ENCODE measurements at regions of chr9 and their contacts with region 1.

Region 1: DNA sequence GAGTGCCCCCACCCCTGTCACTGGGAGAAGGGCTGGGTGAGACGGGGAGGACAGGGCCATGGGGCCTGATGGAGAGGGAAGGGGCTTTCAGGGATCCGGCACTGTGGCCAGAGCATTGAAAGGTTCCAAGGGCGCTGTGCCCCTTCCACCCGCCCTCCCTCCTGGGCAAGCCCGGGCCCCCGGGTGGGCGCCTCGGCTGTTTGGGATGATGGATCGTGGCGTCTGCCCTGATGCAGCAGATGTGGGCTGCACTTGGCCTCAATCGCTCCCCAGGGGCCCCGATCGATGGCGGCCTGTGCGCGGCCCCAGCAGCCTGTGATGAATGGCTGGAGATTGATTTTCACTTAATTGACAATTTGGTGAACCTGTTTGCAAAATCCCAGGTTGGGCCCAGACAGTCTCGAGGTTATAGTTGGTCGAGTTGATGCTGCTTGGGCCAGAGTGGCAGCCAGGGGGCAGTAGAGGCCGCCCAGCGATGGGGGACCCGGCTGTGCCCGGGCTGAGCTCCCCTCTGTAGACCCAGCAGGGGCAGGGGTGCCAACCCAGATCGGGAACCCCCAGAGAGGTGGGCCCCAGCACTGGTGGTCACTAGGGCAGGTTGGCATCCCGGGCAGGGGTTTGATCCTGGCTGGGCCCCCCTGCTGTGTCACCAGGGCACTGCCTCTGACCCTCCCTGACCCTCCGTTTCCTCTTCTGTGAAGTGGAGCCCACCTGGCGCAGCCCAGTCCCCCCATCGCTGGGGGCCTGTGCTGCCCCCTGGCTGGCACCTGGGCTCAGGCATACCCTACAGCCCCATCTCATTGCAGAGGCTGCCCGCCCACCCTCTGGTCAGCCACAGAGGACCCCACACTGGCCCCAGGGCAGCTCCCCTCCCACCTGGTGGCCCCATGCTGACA is 34.7 kb downstream of the LHX3 start:
- DNase-seq: peak; percentile 33 to 62
- ATAC-seq: peak; percentile 60 to 70 (median 68)
- H3K4me3 ChIP-seq: no peak overlapping the region
- H3K4me3 Mint-ChIP-seq: no peak overlapping the region
- H3K27ac ChIP-seq: no peak overlapping the region
- H3K27ac Mint-ChIP-seq: no peak overlapping the region
- H3K4me1 ChIP-seq: no peaks in the 10 kb centered on the region
- H3K4me1 Mint-ChIP-seq: peaks cover 0 to 3% of the 10 kb centered on the region in 2 donors
- H3K27me3 ChIP-seq: peaks cover 2% of the 10 kb centered on the region
- H3K27me3 Mint-ChIP-seq: peaks cover 12 to 14% of the 10 kb centered on the region in 2 donors
- CTCF ChIP-seq: peak; percentile 50

Region 2: GRCh38 chr9:136185596-136186366 is 15.5 kb after region 1 on chr9:
- intact Hi-C with region 1: no loop called
- DNase-seq: no peak
- ATAC-seq: no peak
- H3K4me3 ChIP-seq: no peak overlapping the region
- H3K4me3 Mint-ChIP-seq: no peak overlapping the region
- H3K27ac ChIP-seq: no peak overlapping the region
- H3K27ac Mint-ChIP-seq: no peak overlapping the region
- H3K4me1 ChIP-seq: no peaks in the 10 kb centered on the region
- H3K4me1 Mint-ChIP-seq: no peaks in the 10 kb centered on the region
- H3K27me3 ChIP-seq: no peaks in the 10 kb centered on the region
- H3K27me3 Mint-ChIP-seq: peaks cover 3 to 18% of the 10 kb centered on the region in 2 donors
- CTCF ChIP-seq: no peak

Region 3: DNA sequence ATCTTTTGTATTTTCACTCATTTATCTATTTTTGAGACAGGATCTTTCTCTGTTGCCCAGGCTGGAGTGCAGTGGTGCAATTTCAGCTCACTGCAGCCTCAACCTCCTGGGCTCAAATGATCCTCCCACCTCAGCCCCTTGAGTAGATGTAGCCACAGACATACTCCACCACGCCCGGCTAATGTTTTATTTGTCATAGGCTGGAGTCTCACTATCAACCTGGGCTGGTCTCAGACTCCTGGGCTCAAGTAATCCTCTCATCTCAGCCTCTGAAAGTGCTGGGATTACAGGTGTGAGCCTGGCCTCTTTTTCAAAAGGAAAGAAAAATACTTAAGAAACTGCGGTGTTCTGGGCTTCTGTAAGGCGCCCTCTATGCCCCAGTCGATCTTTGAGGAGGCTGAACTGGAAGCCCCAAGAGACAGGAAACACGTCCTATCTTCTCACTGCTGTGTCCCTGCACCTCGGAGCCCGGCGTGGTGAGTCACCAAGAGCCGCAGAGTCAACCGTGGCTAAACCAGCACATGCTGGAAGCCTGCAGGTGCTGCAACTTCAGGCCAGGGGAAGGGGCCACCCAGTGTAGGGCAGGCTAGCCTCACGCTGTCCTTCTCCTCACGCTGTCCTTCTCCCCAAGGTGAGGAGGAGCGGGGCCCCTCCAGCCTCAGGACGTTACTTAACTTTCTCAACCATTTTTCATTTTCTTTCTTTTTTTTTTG is 49.9 kb after region 1 on chr9:
- intact Hi-C with region 1: no loop called
- DNase-seq: peak in 1 of 2 donors; percentile 52
- ATAC-seq: no peak
- H3K4me3 ChIP-seq: no peak overlapping the region
- H3K4me3 Mint-ChIP-seq: no peak overlapping the region
- H3K27ac ChIP-seq: no peak overlapping the region
- H3K27ac Mint-ChIP-seq: no peak overlapping the region
- H3K4me1 ChIP-seq: peaks cover 11% of the 10 kb centered on the region
- H3K4me1 Mint-ChIP-seq: peaks cover 3 to 5% of the 10 kb centered on the region in 2 donors
- H3K27me3 ChIP-seq: no peaks in the 10 kb centered on the region
- H3K27me3 Mint-ChIP-seq: no peaks in the 10 kb centered on the region
- CTCF ChIP-seq: no peak

Region 4: DNA sequence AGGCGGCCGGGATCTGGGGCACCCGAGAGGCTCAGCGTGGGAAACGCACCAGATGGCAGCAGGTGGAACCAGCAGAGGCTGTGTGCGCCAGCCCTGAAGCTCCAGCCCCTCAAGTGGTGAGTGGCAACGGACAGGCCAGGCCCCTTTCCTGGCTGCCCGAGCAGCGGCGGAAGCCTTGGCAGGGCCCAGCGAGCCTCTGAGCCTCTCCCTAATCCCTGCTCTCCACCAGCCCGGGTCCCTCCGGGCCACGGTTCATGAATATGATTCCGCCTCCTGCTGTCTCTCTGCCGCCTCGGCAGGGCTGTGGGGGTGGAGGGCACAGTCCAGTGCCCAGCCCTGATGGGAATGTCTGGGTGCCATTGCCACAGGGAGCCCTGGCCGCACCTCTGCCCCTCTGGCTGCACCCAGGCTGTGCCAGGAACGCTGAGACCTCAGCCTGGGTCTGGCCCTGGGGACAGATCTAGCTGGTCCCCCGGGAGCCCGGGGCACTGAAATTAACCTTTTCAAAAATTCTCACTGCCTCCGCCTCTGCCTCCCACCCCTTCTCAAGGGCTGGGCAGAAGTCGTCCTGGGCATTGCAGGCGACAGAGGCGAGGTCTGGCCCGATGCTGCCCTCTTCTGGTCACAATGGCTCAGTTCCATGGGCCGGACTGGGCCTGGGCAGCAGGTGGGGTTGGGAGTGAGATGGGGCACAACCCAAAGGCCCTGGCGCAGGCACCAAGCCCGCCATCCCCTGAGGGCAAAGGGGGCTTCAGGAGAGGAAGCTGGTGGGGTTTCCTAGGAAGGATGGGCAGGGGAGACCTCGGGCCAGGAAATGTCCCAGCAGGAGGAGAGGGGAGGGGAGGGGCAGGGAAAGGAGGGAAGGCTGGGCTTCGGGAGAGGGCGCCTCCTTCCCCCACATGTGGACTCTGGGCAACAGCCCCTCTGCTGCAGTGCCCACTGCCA is 113.3 kb after region 1 on chr9:
- intact Hi-C with region 1: loop called (anchors 1 kb)
- DNase-seq: peak; percentile 64 to 84
- ATAC-seq: peak; percentile 83 to 98 (median 96)
- H3K4me3 ChIP-seq: no peak overlapping the region
- H3K4me3 Mint-ChIP-seq: no peak overlapping the region
- H3K27ac ChIP-seq: no peak overlapping the region
- H3K27ac Mint-ChIP-seq: no peak overlapping the region
- H3K4me1 ChIP-seq: peaks cover 14% of the 10 kb centered on the region
- H3K4me1 Mint-ChIP-seq: peaks cover 0 to 4% of the 10 kb centered on the region in 2 donors
- H3K27me3 ChIP-seq: no peaks in the 10 kb centered on the region
- H3K27me3 Mint-ChIP-seq: peaks cover 0 to 5% of the 10 kb centered on the region in 2 donors
- CTCF ChIP-seq: peak; percentile 73